Activated naive CD4-positive, alpha-beta T cell treated with anti-CD3 and anti-CD28 coated beads for 36 hours (primary cell): ENCODE measurements at regions of chr15 and their contacts with region 1.

Region 1: DNA sequence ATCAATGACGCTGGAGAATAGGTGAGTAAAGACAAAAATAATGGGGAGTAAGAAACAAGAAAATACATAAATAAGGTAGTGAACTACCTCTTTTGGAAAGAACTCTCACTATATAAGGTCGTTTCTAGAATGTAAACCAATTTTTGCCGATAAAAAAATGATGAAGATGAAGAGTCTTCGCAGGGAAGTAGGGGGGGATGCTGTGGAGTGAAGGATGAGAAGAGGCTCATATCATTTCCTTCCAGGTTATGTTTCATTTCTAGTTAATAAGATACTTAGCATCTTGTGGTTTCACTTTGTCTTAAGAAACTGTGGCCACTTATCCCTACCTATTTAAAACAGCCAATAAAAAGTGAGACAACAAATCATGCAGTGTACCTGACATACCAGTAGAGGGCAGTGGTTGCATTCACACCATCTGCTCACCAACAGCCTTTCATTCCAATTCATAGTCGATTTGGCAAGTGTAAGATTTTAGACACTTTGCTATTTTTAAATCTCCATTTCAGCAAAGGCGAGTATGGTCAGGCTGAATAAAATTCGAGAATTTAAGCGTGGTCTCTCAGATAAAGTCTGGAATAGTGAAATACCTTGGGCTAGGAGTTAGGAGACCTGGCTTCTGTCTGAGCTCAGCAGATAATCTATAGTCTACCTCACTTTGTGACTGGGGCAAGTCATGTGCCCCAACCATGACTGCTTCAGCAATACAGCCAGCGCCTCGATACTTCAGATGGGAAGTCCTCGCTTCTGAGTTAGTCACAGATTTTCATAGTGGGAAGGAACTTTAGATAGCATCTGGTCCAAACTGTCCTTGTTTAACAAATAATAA is 28.9 kb upstream of the ICE2 start:
- DNase-seq: peak; percentile 70
- H3K4me3 Mint-ChIP-seq: no peak overlapping the region
- H3K27ac Mint-ChIP-seq: peak overlapping the region; percentile 68
- H3K4me1 Mint-ChIP-seq: peaks cover 48% of the 10 kb centered on the region
- H3K27me3 Mint-ChIP-seq: no peaks in the 10 kb centered on the region

Region 2: GRCh38 chr15:60362321-60363086 is 145.3 kb before region 1 on chr15:
- CTCF ChIA-PET with region 1: interaction called, 9 read pairs
- intact Hi-C with region 1: loop called (anchors 5 kb)
- DNase-seq: peak; percentile 61
- H3K4me3 Mint-ChIP-seq: no peak overlapping the region
- H3K27ac Mint-ChIP-seq: no peak overlapping the region
- H3K4me1 Mint-ChIP-seq: peaks cover 12% of the 10 kb centered on the region
- H3K27me3 Mint-ChIP-seq: no peaks in the 10 kb centered on the region

Region 3: GRCh38 chr15:60520825-60521368 is 13.1 kb after region 1 on chr15:
- CTCF ChIA-PET with region 1: interaction called, 74 read pairs
- intact Hi-C with region 1: loop called (anchors 1 kb)
- DNase-seq: peak; percentile 91
- H3K4me3 Mint-ChIP-seq: no peak overlapping the region
- H3K27ac Mint-ChIP-seq: peak overlapping the region; percentile 42
- H3K4me1 Mint-ChIP-seq: peaks cover 42% of the 10 kb centered on the region
- H3K27me3 Mint-ChIP-seq: no peaks in the 10 kb centered on the region

Region 4: DNA sequence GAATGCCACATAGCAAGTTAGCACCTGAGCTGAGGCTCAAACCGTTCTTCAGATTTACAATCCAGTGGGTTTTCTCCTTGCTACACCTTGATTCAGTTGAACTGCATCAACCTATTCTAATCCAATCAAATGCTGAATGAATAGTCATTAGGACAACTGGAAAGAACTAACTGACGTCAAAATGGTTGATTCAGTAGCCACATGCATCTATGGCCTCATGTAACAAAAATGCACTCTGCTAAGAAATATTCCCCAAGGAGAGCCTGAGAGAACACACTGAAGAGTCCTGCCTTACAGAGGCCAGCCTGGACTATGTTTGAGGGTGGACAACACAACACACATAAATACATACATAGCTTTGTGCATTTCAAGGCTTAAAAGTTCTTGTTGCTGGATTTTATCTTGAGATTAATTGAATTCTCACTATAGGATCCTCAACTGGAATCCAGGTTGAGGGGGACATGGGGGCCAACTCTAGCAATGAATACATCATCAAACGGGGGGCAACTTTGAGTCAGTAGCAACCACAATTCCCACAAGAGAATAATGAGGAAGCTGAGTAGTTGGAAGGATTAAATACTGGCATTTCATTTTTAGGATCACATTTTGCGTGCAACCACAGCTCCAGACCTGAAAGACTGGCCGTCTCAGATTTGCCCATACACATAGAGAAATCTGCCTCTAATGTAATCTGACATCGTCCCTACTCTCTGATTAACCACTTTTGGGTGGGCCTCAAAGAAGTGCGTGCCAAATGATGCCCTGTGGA is 251.3 kb after region 1 on chr15:
- CTCF ChIA-PET with region 1: no interaction called
- intact Hi-C with region 1: no loop called
- DNase-seq: no peak
- H3K4me3 Mint-ChIP-seq: no peak overlapping the region
- H3K27ac Mint-ChIP-seq: no peak overlapping the region
- H3K4me1 Mint-ChIP-seq: peaks cover 29% of the 10 kb centered on the region
- H3K27me3 Mint-ChIP-seq: no peaks in the 10 kb centered on the region

Region 5: DNA sequence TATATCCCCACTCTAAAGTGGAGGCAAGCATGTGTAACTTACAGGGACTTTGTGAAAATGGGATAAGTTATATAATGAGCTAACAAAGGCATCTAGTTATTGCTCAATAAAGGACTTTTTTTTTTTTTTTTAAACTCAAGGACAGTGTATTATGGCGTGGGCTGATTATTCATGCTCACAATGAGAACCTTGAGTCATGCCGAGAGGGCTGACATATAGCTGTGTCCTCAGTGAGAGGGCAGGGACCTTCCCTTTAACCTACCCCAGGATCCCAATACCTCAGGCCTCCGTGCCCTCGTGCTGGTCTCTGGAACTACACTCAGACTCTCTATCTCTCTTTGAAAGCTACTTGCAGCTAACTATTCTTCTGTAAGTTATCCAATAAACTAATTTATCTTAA is 291.0 kb after region 1 on chr15:
- CTCF ChIA-PET with region 1: interaction called, 4 read pairs
- intact Hi-C with region 1: loop called (anchors 5 kb)
- DNase-seq: peak; percentile 87
- H3K4me3 Mint-ChIP-seq: peak overlapping the region; percentile 34
- H3K27ac Mint-ChIP-seq: peak overlapping the region; percentile 98
- H3K4me1 Mint-ChIP-seq: peaks cover 83% of the 10 kb centered on the region
- H3K27me3 Mint-ChIP-seq: no peaks in the 10 kb centered on the region

Region 6: GRCh38 chr15:60932051-60932915 is 424.5 kb after region 1 on chr15:
- CTCF ChIA-PET with region 1: interaction called, 10 read pairs
- intact Hi-C with region 1: loop called (anchors 1 kb)
- DNase-seq: peak; percentile 71
- H3K4me3 Mint-ChIP-seq: no peak overlapping the region
- H3K27ac Mint-ChIP-seq: no peak overlapping the region
- H3K4me1 Mint-ChIP-seq: peaks cover 12% of the 10 kb centered on the region
- H3K27me3 Mint-ChIP-seq: peaks cover 10% of the 10 kb centered on the region

Region 7: DNA sequence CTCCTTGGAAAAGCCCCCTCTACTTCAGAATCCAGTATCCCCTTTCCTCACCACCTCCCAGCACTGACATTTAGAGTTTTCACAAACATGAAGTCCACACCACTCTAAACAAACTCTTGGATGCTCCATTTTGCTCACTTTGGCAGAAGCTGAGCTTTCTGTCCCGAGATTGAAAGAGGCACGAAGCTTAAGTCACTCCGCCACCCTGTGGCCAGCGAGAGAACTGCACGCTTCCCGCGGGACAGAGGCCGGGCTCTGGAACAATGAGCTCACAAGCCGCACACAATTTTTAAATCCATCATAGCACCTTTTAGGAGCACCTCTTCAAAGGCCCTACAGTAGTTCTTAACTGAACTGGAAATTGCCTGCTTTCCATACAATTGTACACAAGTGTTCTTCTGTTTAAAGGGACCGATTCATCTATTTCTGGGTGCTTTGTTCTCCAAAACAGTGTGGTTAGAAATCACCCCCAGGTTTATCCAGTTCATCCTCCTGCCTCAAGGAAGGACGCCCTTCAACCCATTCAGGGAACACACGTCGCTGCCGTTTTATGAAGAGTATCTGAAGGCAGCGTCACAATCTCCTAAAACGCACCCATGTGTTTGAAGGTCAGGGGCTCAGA is 1326.4 kb after region 1 on chr15:
- CTCF ChIA-PET with region 1: interaction called, 4 read pairs
- intact Hi-C with region 1: loop called (anchors 10 kb)
- DNase-seq: peak; percentile 83
- H3K4me3 Mint-ChIP-seq: no peak overlapping the region
- H3K27ac Mint-ChIP-seq: no peak overlapping the region
- H3K4me1 Mint-ChIP-seq: no peaks in the 10 kb centered on the region
- H3K27me3 Mint-ChIP-seq: peaks cover 18% of the 10 kb centered on the region